ENCODE measurements at regions of chr21 and their contacts with region 1.

Region 1: GRCh38 chr21:45130324-45130774 is 56.0 kb downstream of the ADARB1 start:
- DNase-seq: no peak
- ATAC-seq: peak; percentile 35
- H3K4me3 Mint-ChIP-seq: no peak overlapping the region
- H3K27ac Mint-ChIP-seq: no peak overlapping the region
- H3K4me1 Mint-ChIP-seq: peaks cover 31% of the 10 kb centered on the region
- H3K27me3 Mint-ChIP-seq: no peaks in the 10 kb centered on the region

Region 2: DNA sequence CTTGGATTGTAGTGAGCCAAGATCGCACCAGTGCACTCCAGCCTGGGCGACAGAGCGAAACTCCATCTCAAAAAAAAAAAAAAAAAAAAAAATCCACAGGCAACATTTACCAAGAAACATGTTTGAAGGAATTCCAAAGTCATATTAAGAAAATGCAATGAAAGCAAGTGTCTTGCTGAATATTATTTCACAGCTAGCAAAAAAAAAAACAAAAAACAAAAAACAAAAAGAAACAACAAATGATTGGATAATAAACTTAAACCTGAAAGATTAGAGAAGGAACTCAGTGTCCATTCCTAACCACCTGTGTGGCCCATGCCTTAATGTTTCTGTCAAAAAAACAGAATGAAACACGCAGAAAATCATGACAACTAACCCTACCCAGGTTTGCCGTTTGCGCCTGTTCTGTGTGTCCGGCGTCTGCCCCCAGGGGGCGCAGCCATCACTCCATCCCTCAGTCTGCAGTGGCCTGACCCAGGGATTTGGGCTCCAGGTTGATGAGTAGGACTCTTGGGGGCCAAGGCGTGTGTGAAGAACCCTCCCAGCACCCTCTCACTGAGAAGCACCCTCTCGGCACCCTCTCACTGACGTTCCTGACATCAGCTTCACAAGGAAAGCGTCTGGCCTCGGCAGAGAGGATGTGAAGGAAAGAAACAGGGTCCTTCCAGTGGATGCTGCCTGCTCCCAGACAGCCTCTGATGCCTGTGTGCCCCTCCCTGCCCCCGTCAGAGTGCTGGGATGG is 237.6 kb before region 1 on chr21:
- CTCF ChIA-PET with region 1: interaction called, 3 read pairs
- POLR2A ChIA-PET with region 1: no interaction called
- intact Hi-C with region 1: loop called in 1 of 2 experiments (anchors 2 kb)
- DNase-seq: peak; percentile 87
- ATAC-seq: peak; percentile 85
- H3K4me3 Mint-ChIP-seq: no peak overlapping the region
- H3K27ac Mint-ChIP-seq: no peak overlapping the region
- H3K4me1 Mint-ChIP-seq: peaks cover 5% of the 10 kb centered on the region
- H3K27me3 Mint-ChIP-seq: no peaks in the 10 kb centered on the region

Region 3: GRCh38 chr21:44949779-44950198 is 180.6 kb before region 1 on chr21:
- CTCF ChIA-PET with region 1: interaction called, 64 read pairs
- POLR2A ChIA-PET with region 1: no interaction called
- intact Hi-C with region 1: loop called (anchors 1 kb)
- DNase-seq: peak; percentile 91
- ATAC-seq: peak; percentile 91
- H3K4me3 Mint-ChIP-seq: no peak overlapping the region
- H3K27ac Mint-ChIP-seq: no peak overlapping the region
- H3K4me1 Mint-ChIP-seq: peaks cover 8% of the 10 kb centered on the region
- H3K27me3 Mint-ChIP-seq: no peaks in the 10 kb centered on the region

Region 4: GRCh38 chr21:45054921-45055612 is 75.3 kb before region 1 on chr21:
- CTCF ChIA-PET with region 1: interaction called, 11 read pairs
- POLR2A ChIA-PET with region 1: no interaction called
- intact Hi-C with region 1: no loop called
- DNase-seq: no peak
- ATAC-seq: no peak
- H3K4me3 Mint-ChIP-seq: no peak overlapping the region
- H3K27ac Mint-ChIP-seq: no peak overlapping the region
- H3K4me1 Mint-ChIP-seq: no peaks in the 10 kb centered on the region
- H3K27me3 Mint-ChIP-seq: peaks cover 15% of the 10 kb centered on the region

Region 5: GRCh38 chr21:45098867-45099266 is 31.5 kb before region 1 on chr21:
- CTCF ChIA-PET with region 1: interaction called, 23 read pairs
- POLR2A ChIA-PET with region 1: no interaction called
- intact Hi-C with region 1: loop called in 1 of 2 experiments (anchors 1 kb)
- DNase-seq: no peak
- ATAC-seq: peak; percentile 51
- H3K4me3 Mint-ChIP-seq: no peak overlapping the region
- H3K27ac Mint-ChIP-seq: peak overlapping the region; percentile 14
- H3K4me1 Mint-ChIP-seq: peaks cover 45% of the 10 kb centered on the region
- H3K27me3 Mint-ChIP-seq: no peaks in the 10 kb centered on the region

Region 6: GRCh38 chr21:45109831-45110492 is 20.4 kb before region 1 on chr21:
- CTCF ChIA-PET with region 1: interaction called, 16 read pairs
- POLR2A ChIA-PET with region 1: no interaction called
- intact Hi-C with region 1: no loop called
- DNase-seq: peak; percentile 70
- ATAC-seq: peak; percentile 59
- H3K4me3 Mint-ChIP-seq: peak overlapping the region; percentile 62
- H3K27ac Mint-ChIP-seq: peak overlapping the region; percentile 74
- H3K4me1 Mint-ChIP-seq: peaks cover 76% of the 10 kb centered on the region
- H3K27me3 Mint-ChIP-seq: no peaks in the 10 kb centered on the region

Region 7: DNA sequence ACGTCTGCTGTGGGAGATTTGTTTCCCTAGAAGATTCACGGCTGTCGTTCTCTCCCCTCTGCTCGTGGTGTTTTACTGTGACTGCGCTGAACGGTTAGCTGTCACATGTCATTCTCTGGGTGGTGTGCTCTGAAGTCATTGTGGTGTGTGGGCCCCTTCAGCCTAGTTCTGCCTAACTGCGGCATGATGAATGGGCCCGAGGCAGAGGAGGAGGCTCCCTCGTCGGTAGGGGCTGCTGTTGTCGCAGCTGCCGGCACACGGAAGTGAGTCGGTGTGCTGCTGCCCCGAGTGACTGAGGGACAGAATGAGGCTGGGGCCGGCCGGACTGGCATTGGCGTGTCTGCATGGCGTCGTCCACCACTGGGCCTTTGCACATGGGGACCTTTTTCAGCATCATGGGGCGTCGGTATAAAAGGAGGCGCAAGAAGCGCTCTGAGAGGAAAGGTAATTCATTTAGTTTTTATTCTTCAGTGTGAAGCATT is 22.0 kb after region 1 on chr21:
- CTCF ChIA-PET with region 1: interaction called, 73 read pairs
- POLR2A ChIA-PET with region 1: no interaction called
- intact Hi-C with region 1: no loop called
- DNase-seq: peak; percentile 87
- ATAC-seq: peak; percentile 99
- H3K4me3 Mint-ChIP-seq: peak overlapping the region; percentile 63
- H3K27ac Mint-ChIP-seq: peak overlapping the region; percentile 78
- H3K4me1 Mint-ChIP-seq: peaks cover 37% of the 10 kb centered on the region
- H3K27me3 Mint-ChIP-seq: no peaks in the 10 kb centered on the region